ENCODE measurements at regions of chr9 and their contacts with region 1.

Region 1: GRCh38 chr9:132800038-132800648 is 77.9 kb downstream of the AK8 start:
- DNase-seq: peak; percentile 85
- H3K4me3 ChIP-seq: peak overlapping the region in 1 of 2 experiments; percentile 28; a peak in 1 of 4 replicates
- H3K27ac ChIP-seq: peak overlapping the region in 1 of 2 experiments; percentile 66; a peak in 2 of 4 replicates
- H3K4me1 ChIP-seq: peaks cover 0 to 31% of the 10 kb centered on the region in 2 experiments; a peak in 2 of 4 replicates
- H3K27me3 ChIP-seq: no peaks in the 10 kb centered on the region; the same call in 1 of the 2 replicates
- CTCF ChIP-seq: peak; percentile 81
- EP300 ChIP-seq: peak in 1 of 2 experiments; percentile 70; a peak in 2 of 4 replicates
- RAD21 ChIP-seq: peak; percentile 97

Region 2: GRCh38 chr9:132301521-132301920 is 498.6 kb before region 1 on chr9:
- CTCF ChIA-PET with region 1: no interaction called
- POLR2A ChIA-PET with region 1: no interaction called
- DNase-seq: no peak
- H3K4me3 ChIP-seq: no peak overlapping the region
- H3K27ac ChIP-seq: peak overlapping the region in 1 of 2 experiments; percentile 1; a peak in 1 of 4 replicates
- H3K4me1 ChIP-seq: peaks cover 0 to 6% of the 10 kb centered on the region in 2 experiments; a peak in 2 of 4 replicates
- H3K27me3 ChIP-seq: no peaks in the 10 kb centered on the region
- CTCF ChIP-seq: no peak
- EP300 ChIP-seq: no peak
- RAD21 ChIP-seq: no peak

Region 3: GRCh38 chr9:132411091-132411508 is 389.0 kb before region 1 on chr9:
- CTCF ChIA-PET with region 1: interaction called, 16 read pairs
- POLR2A ChIA-PET with region 1: no interaction called
- DNase-seq: peak; percentile 67
- H3K4me3 ChIP-seq: no peak overlapping the region; a peak in 2 of 4 replicates
- H3K27ac ChIP-seq: no peak overlapping the region
- H3K4me1 ChIP-seq: peaks cover 0 to 21% of the 10 kb centered on the region in 2 experiments; a peak in 2 of 4 replicates
- H3K27me3 ChIP-seq: no peaks in the 10 kb centered on the region
- CTCF ChIP-seq: peak; percentile 53
- EP300 ChIP-seq: no peak
- RAD21 ChIP-seq: peak; percentile 71

Region 4: DNA sequence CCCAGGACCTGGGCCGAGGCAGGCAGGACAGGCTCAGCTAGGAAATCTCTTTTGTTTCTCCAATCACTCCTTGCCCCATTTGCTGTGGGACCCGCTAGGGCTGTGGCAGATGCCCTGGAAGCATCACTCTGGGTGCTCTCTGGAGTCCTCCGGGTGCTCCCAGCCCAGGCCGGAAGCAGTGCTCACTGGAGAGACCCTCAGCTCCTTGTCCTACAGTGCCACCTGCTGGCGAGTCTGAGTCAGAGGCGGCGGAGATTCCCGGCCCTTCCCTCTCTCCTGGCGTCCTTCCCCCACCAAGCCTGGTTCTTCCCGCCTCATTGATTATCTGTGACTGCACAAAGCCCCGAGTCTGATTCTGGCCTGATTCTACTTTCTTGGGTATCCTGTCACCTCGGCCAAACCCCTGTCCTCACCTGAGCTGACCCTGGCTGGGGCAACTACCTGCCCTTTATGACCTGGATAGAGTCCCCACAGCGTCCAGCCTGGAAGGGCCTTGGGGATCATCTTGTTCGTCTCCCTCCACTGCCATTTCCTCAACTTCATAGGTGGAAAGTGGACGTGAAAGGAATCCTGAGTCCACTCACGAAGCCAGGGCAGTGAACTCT is 225.0 kb before region 1 on chr9:
- CTCF ChIA-PET with region 1: interaction called, 10 read pairs
- POLR2A ChIA-PET with region 1: no interaction called
- DNase-seq: peak; percentile 93
- H3K4me3 ChIP-seq: no peak overlapping the region; a peak in 1 of 4 replicates
- H3K27ac ChIP-seq: no peak overlapping the region
- H3K4me1 ChIP-seq: no peaks in the 10 kb centered on the region; a peak in 1 of 4 replicates
- H3K27me3 ChIP-seq: peaks cover 33% of the 10 kb centered on the region
- CTCF ChIP-seq: peak; percentile 80
- EP300 ChIP-seq: no peak
- RAD21 ChIP-seq: peak; percentile 99

Region 5: DNA sequence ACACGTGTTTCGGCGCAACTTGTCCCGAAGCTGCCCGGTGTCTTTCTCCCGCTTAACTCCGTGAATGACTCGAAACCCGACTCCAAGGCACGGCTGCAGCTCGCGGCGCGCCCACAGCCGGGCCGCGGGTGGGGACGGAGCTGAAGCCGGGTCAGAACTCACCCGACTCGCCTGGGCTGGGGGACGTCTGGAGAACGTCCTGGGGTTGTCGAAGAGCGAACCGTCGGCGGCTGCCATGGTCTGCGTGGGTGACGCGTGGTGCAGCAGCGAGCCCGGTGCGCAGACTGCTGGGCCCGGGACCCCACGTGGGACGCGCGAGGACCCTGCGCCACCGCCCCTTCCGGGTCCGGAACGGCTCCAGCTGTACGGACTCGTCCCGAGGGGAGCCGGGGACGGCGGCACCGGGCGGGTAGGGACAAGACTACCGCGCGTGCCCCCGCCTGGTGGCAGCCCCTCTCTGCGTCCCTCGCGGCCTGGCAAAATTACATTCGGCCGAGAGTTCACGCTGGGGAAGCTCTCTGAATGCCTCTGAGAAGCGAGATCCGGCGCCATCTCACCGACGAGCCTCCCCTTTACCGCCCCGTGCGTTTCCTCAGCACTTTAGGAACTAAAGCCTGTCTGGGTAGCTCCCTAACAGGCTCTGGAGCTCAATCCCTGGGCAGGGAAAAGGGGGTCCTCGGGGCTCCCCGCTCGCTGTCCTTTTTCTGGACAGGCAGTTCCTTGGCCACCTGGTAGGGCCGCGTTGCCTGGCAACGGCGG is 130.3 kb before region 1 on chr9 and contains the start of gene DDX31:
- CTCF ChIA-PET with region 1: interaction called, 37 read pairs
- POLR2A ChIA-PET with region 1: interaction called, 32 read pairs
- DNase-seq: peak; percentile 94
- H3K4me3 ChIP-seq: peak within 1 kb of the TSS; percentile 97 to 98
- H3K27ac ChIP-seq: peak within 1 kb of the TSS; percentile 99
- H3K4me1 ChIP-seq: peaks cover 0 to 15% of the 10 kb centered on the region in 2 experiments; a peak in 2 of 4 replicates
- H3K27me3 ChIP-seq: no peaks in the 10 kb centered on the region
- CTCF ChIP-seq: no peak
- EP300 ChIP-seq: no peak; a peak in 1 of 4 replicates
- RAD21 ChIP-seq: no peak
- polyA plus RNA-seq, gene DDX31: 13.9 and 17.3 TPM in 2 replicates

Region 6: GRCh38 chr9:132683873-132684272 is 116.3 kb before region 1 on chr9:
- CTCF ChIA-PET with region 1: no interaction called
- POLR2A ChIA-PET with region 1: no interaction called
- DNase-seq: no peak
- H3K4me3 ChIP-seq: no peak overlapping the region
- H3K27ac ChIP-seq: no peak overlapping the region
- H3K4me1 ChIP-seq: no peaks in the 10 kb centered on the region
- H3K27me3 ChIP-seq: no peaks in the 10 kb centered on the region
- CTCF ChIP-seq: no peak
- EP300 ChIP-seq: no peak
- RAD21 ChIP-seq: no peak

Region 7: GRCh38 chr9:132894356-132895240 is 94.5 kb after region 1 on chr9:
- CTCF ChIA-PET with region 1: interaction called, 10 read pairs
- POLR2A ChIA-PET with region 1: no interaction called
- DNase-seq: no peak
- H3K4me3 ChIP-seq: no peak overlapping the region
- H3K27ac ChIP-seq: no peak overlapping the region
- H3K4me1 ChIP-seq: no peaks in the 10 kb centered on the region
- H3K27me3 ChIP-seq: no peaks in the 10 kb centered on the region
- CTCF ChIP-seq: no peak
- EP300 ChIP-seq: no peak
- RAD21 ChIP-seq: no peak

Measured in SK-N-SH (cell line).